ENCODE measurements at regions of chr2 and their contacts with region 1.

Region 1: GRCh38 chr2:229714736-229715541 is 584 bp upstream of the DNER start:
- DNase-seq: peak; percentile 36 to 69 (median 52)
- H3K4me3 ChIP-seq: peak overlapping the region; percentile 56 to 92 (median 81)
- H3K27ac ChIP-seq: peak overlapping the region in 56 of 59 donors; percentile 29 to 92 (median 83)
- H3K27me3 ChIP-seq: peaks cover 0 to 21% (median 0%) of the 10 kb centered on the region in 45 donors
- CTCF ChIP-seq: peak in 18 of 56 donors; percentile 8 to 51 (median 21)

Region 2: DNA sequence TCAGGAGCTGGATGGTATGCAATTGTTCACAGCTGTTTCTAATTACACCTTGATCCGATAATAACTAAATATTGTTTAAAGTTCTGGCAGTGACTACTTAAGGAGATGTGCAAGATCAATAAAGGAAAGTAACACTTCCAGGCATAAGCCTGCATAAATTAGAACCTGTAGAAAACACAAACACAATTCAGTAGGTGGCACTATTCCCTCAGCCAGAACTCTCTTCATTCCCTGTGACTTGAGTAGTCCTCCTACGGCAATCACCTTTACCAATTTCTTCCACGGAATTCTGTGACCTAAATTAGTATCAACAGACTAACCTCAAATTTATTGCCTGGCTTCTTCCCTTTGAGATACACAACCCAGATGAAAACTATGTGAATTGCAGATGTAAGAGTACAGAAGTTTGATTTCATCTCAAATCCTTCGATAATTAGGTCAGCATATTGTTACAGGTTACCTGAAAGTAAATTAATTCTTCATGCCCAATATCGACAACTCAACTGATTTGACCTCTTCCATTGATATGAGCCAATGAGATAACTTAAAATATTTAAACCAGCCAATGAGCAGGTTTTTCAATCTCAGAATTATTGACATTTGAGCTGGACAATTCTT is 581.7 kb before region 1 on chr2:
- intact Hi-C with region 1: loop called (anchors 5 to 10 kb)
- DNase-seq: peak in 1 of 10 donors; percentile 18
- H3K4me3 ChIP-seq: no peak overlapping the region
- H3K27ac ChIP-seq: no peak overlapping the region
- H3K27me3 ChIP-seq: no peaks in the 10 kb centered on the region
- CTCF ChIP-seq: peak in 55 of 56 donors; percentile 16 to 78 (median 57)

Region 3: DNA sequence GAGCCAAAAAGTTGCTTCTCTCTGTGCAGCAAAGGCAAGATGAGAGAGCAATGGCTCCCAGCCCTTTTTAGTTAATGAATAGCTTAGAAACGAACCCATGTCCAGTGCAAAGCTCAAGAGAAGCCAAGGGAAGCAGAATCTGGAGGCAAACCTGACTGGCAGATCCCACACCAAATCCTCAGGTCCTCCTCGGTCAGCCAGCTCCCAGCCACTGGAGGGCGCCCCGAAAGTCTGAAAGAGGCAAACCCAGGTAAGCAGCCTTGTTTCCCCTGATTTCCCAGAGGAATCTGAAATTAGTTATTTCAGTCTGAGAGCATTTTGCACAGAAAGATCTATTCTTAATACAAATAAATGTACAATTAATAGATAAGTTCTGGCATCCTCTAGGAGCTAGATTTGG is 372.6 kb before region 1 on chr2:
- intact Hi-C with region 1: loop called in 1 of 2 experiments (anchors 2 kb)
- DNase-seq: peak in 6 of 10 donors; percentile 7 to 55 (median 42)
- H3K4me3 ChIP-seq: no peak overlapping the region
- H3K27ac ChIP-seq: no peak overlapping the region
- H3K27me3 ChIP-seq: no peaks in the 10 kb centered on the region
- CTCF ChIP-seq: peak in 48 of 56 donors; percentile 13 to 67 (median 46)

Region 4: GRCh38 chr2:229431327-229431954 is 283.5 kb before region 1 on chr2:
- intact Hi-C with region 1: loop called (anchors 5 kb)
- DNase-seq: no peak
- H3K4me3 ChIP-seq: no peak overlapping the region
- H3K27ac ChIP-seq: peak overlapping the region in 1 of 59 donors; percentile 14
- H3K27me3 ChIP-seq: no peaks in the 10 kb centered on the region
- CTCF ChIP-seq: peak; percentile 39 to 77 (median 64)

Region 5: GRCh38 chr2:229553091-229553490 is 161.8 kb before region 1 on chr2:
- intact Hi-C with region 1: no loop called
- DNase-seq: no peak
- H3K4me3 ChIP-seq: no peak overlapping the region
- H3K27ac ChIP-seq: no peak overlapping the region
- H3K27me3 ChIP-seq: no peaks in the 10 kb centered on the region
- CTCF ChIP-seq: no peak

Region 6: GRCh38 chr2:229610333-229610732 is 104.6 kb before region 1 on chr2:
- intact Hi-C with region 1: loop called in 1 of 2 experiments (anchors 5 kb)
- DNase-seq: no peak
- H3K4me3 ChIP-seq: no peak overlapping the region
- H3K27ac ChIP-seq: peak overlapping the region in 3 of 59 donors; percentile 0 to 17 (median 8)
- H3K27me3 ChIP-seq: no peaks in the 10 kb centered on the region
- CTCF ChIP-seq: no peak

Region 7: GRCh38 chr2:229627728-229628127 is 87.2 kb before region 1 on chr2:
- intact Hi-C with region 1: no loop called
- DNase-seq: no peak
- H3K4me3 ChIP-seq: no peak overlapping the region
- H3K27ac ChIP-seq: no peak overlapping the region
- H3K27me3 ChIP-seq: no peaks in the 10 kb centered on the region
- CTCF ChIP-seq: no peak